SK-N-SH (cell line): ENCODE measurements at regions of chr7 and their contacts with region 1.

Region 1: GRCh38 chr7:123534383-123535260 is at the start of gene IQUB:
- DNase-seq: peak; percentile 100
- H3K4me3 ChIP-seq: peak within 1 kb of the TSS; percentile 70 to 73
- H3K27ac ChIP-seq: peak within 1 kb of the TSS; percentile 65 to 73
- H3K4me1 ChIP-seq: peaks cover 8 to 20% of the 10 kb centered on the region in 2 experiments
- H3K27me3 ChIP-seq: no peaks in the 10 kb centered on the region
- CTCF ChIP-seq: no peak
- EP300 ChIP-seq: no peak
- RAD21 ChIP-seq: no peak
- polyA plus RNA-seq, gene IQUB: 0.10 and 0.11 TPM in 2 replicates

Region 2: GRCh38 chr7:123548406-123548805 is 13.8 kb after region 1 on chr7:
- CTCF ChIA-PET with region 1: interaction called, 18 read pairs
- POLR2A ChIA-PET with region 1: no interaction called
- DNase-seq: no peak
- H3K4me3 ChIP-seq: no peak overlapping the region
- H3K27ac ChIP-seq: peak overlapping the region in 1 of 2 experiments; percentile 36; a peak in 2 of 4 replicates
- H3K4me1 ChIP-seq: no peaks in the 10 kb centered on the region; a peak in 2 of 4 replicates
- H3K27me3 ChIP-seq: no peaks in the 10 kb centered on the region
- CTCF ChIP-seq: no peak
- EP300 ChIP-seq: no peak
- RAD21 ChIP-seq: no peak